IMR-90 (cell line): ENCODE measurements at regions of chr15 and their contacts with region 1.

Region 1: DNA sequence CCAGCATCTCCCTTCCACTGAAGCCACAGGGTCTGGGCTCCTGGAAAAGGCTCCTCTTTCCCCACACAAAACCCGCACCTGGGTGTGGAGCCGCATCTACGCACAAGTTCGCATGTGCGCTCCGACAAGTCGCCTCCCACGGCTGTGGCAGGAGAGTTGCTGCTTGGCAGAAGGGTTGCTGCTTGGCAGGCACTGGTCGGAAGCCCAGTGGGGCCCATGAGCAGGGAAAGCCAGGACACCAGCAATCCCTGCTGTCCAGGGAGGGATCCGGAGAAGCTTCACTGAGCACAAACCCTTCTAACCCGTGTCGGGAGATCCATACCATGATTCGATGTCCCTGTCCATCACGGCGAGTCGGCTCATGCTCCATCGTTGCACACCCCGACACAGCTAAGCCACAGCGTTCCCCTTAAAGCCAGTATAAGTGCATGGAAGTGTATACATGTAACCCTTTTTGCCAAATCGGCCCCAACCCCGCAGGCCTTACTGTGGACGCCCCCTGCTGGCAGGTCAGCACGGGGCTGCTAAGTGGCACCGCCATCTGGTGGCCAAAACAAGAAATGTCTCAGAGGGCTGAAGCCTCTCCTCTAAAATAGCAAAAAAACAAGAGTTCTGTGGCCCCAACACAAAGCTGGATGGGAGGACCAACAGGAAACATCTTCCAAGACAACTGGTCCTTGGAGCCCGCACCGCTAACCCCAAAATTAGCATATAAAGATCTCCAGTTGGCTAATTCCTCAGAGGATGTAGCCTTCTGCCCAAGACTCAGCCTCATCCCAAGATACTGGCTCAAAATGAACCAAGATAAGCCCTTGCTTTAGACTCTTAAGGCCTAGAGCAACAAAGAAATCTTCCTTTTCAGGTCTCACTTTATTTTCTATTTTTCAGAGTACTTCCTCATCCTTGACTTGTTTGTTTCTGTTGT is 8.3 kb downstream of the ANKRD63 start:
- DNase-seq: peak; percentile 78
- ATAC-seq: peak; percentile 86
- H3K4me3 ChIP-seq: no peak overlapping the region
- H3K27ac ChIP-seq: no peak overlapping the region
- H3K4me1 ChIP-seq: no peaks in the 10 kb centered on the region
- H3K27me3 ChIP-seq: peaks cover 21% of the 10 kb centered on the region
- CTCF ChIP-seq: peak; percentile 100; the same call in 1 of the 2 replicates
- POLR2A ChIP-seq: no peak
- RAD21 ChIP-seq: peak; percentile 98

Region 2: GRCh38 chr15:40044717-40045571 is 229.7 kb before region 1 on chr15:
- CTCF ChIA-PET with region 1: interaction called, 17 read pairs
- POLR2A ChIA-PET with region 1: no interaction called
- dilution Hi-C with region 1: no loop called
- in situ Hi-C with region 1: loop called (anchors 5 kb)
- intact Hi-C with region 1: loop called (anchors 1 kb)
- DNase-seq: peak; percentile 76
- ATAC-seq: peak; percentile 99
- H3K4me3 ChIP-seq: no peak overlapping the region
- H3K27ac ChIP-seq: no peak overlapping the region
- H3K4me1 ChIP-seq: peaks cover 20% of the 10 kb centered on the region
- H3K27me3 ChIP-seq: no peaks in the 10 kb centered on the region
- CTCF ChIP-seq: peak; percentile 99
- POLR2A ChIP-seq: peak; percentile 74
- RAD21 ChIP-seq: peak; percentile 100

Region 3: DNA sequence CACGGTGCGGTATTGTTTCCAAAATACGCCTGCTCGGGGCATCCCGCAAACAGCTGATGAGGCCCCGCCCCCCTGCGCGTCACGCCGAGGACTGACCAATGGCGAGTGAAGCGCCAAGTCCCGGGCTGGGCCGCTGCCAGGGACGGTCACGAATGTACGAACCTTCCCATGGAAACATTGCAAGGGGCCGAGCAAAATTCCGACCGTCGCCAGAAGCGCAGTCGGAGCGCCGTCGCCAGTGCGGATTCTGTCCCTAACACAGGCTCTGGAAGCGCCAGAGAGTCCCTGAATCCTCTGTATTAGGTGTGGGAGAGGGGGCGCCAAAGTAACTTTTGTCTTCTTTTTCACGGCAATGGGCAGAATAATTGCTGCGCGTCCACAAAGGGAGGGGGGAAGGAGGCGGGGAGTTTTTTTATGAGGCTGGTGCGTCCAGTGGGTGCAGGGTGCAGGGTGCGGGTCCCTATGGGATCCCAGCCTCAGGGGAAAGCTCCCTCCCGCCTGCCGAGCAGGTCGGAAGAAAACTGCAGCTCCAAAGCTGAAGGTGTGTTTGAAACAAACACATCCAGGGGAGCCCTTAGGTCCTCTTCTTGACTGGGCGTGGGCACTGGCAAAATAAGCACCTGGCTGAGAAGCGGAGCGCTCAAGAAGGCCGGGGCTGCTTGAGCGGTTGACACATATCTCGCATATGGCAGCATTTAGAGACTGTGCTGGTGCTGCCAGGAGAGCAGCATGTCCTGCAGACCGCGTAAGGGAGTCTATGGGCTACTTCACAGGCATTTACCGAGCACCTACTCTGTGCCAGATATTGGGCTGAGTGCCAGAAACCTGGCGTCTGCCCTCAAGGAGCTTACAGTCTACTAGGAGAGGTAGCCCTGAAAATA is 165.5 kb before region 1 on chr15 and contains the start of gene BMF:
- CTCF ChIA-PET with region 1: interaction called, 3 read pairs
- POLR2A ChIA-PET with region 1: no interaction called
- dilution Hi-C with region 1: no loop called
- in situ Hi-C with region 1: no loop called
- intact Hi-C with region 1: loop called (anchors 5 kb)
- DNase-seq: peak; percentile 99
- ATAC-seq: peak; percentile 84
- H3K4me3 ChIP-seq: peak within 1 kb of the TSS; percentile 63
- H3K27ac ChIP-seq: no peak within 1 kb of the TSS; the same call in 1 of the 2 replicates
- H3K4me1 ChIP-seq: peaks cover 19% of the 10 kb centered on the region
- H3K27me3 ChIP-seq: peaks cover 17% of the 10 kb centered on the region
- CTCF ChIP-seq: peak; percentile 40
- POLR2A ChIP-seq: no peak; the same call in 1 of the 2 replicates
- RAD21 ChIP-seq: 0 out of 2 replicates have a peak, but pooled peaks have one; percentile 25
- total RNA-seq, gene BMF: 1.7 and 2.9 TPM in 2 replicates

Region 4: GRCh38 chr15:40217159-40217824 is 57.3 kb before region 1 on chr15:
- CTCF ChIA-PET with region 1: interaction called, 81 read pairs
- POLR2A ChIA-PET with region 1: no interaction called
- dilution Hi-C with region 1: no loop called
- in situ Hi-C with region 1: loop called (anchors 5 kb)
- intact Hi-C with region 1: loop called (anchors 1 kb)
- DNase-seq: peak; percentile 70
- ATAC-seq: peak; percentile 92
- H3K4me3 ChIP-seq: no peak overlapping the region
- H3K27ac ChIP-seq: no peak overlapping the region
- H3K4me1 ChIP-seq: no peaks in the 10 kb centered on the region
- H3K27me3 ChIP-seq: no peaks in the 10 kb centered on the region
- CTCF ChIP-seq: peak; percentile 95
- POLR2A ChIP-seq: no peak
- RAD21 ChIP-seq: peak; percentile 96

Region 5: GRCh38 chr15:40290918-40291574 is 16.4 kb after region 1 on chr15:
- CTCF ChIA-PET with region 1: interaction called, 13 read pairs
- POLR2A ChIA-PET with region 1: no interaction called
- dilution Hi-C with region 1: no loop called
- in situ Hi-C with region 1: no loop called
- intact Hi-C with region 1: no loop called
- DNase-seq: peak; percentile 49
- ATAC-seq: peak; percentile 92
- H3K4me3 ChIP-seq: peak overlapping the region; percentile 27
- H3K27ac ChIP-seq: no peak overlapping the region
- H3K4me1 ChIP-seq: peaks cover 3% of the 10 kb centered on the region
- H3K27me3 ChIP-seq: peaks cover 69% of the 10 kb centered on the region
- CTCF ChIP-seq: no peak
- POLR2A ChIP-seq: no peak
- RAD21 ChIP-seq: no peak

Region 6: GRCh38 chr15:40310001-40310959 is 35.7 kb after region 1 on chr15:
- CTCF ChIA-PET with region 1: interaction called, 8 read pairs
- POLR2A ChIA-PET with region 1: no interaction called
- dilution Hi-C with region 1: no loop called
- in situ Hi-C with region 1: no loop called
- intact Hi-C with region 1: loop called (anchors 1 kb)
- DNase-seq: peak; percentile 33
- ATAC-seq: peak; percentile 71
- H3K4me3 ChIP-seq: no peak overlapping the region
- H3K27ac ChIP-seq: no peak overlapping the region
- H3K4me1 ChIP-seq: peaks cover 6% of the 10 kb centered on the region
- H3K27me3 ChIP-seq: peaks cover 57% of the 10 kb centered on the region
- CTCF ChIP-seq: peak; percentile 71
- POLR2A ChIP-seq: no peak
- RAD21 ChIP-seq: peak; percentile 83

Region 7: GRCh38 chr15:40398413-40398873 is 123.8 kb after region 1 on chr15:
- CTCF ChIA-PET with region 1: no interaction called
- POLR2A ChIA-PET with region 1: no interaction called
- dilution Hi-C with region 1: no loop called
- in situ Hi-C with region 1: no loop called
- intact Hi-C with region 1: no loop called
- DNase-seq: no peak
- ATAC-seq: no peak
- H3K4me3 ChIP-seq: no peak overlapping the region
- H3K27ac ChIP-seq: no peak overlapping the region
- H3K4me1 ChIP-seq: no peaks in the 10 kb centered on the region
- H3K27me3 ChIP-seq: no peaks in the 10 kb centered on the region
- CTCF ChIP-seq: no peak
- POLR2A ChIP-seq: no peak
- RAD21 ChIP-seq: no peak

Region 8: DNA sequence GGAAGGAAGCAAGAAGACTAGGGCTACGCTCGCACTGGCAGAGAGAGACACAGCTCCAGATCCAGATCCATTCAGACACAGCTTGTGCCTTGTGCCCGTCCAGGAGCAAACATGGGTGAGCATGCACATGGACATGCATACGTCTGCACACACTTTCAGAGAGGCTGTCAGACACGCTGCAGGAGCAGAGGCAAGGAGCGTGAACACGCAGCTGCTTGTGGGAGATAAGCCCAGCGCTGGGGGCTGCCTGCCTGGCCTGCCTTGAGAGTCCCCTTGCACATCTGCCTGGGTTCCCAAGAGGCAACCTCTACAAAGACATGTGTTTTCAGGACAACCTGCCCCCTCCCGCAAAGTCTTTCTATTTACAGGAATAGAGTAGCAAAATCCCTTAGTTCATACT is 152.6 kb after region 1 on chr15:
- CTCF ChIA-PET with region 1: interaction called, 3 read pairs
- POLR2A ChIA-PET with region 1: no interaction called
- dilution Hi-C with region 1: no loop called
- in situ Hi-C with region 1: loop called (anchors 5 kb)
- intact Hi-C with region 1: no loop called
- DNase-seq: no peak
- ATAC-seq: no peak
- H3K4me3 ChIP-seq: no peak overlapping the region
- H3K27ac ChIP-seq: no peak overlapping the region
- H3K4me1 ChIP-seq: no peaks in the 10 kb centered on the region; the same call in 1 of the 2 replicates
- H3K27me3 ChIP-seq: peaks cover 37% of the 10 kb centered on the region
- CTCF ChIP-seq: no peak
- POLR2A ChIP-seq: no peak
- RAD21 ChIP-seq: no peak